ENCODE measurements at regions of chr6 and their contacts with region 1.

Region 1: GRCh38 chr6:36765594-36766398 is 68.2 kb downstream of the RAB44 start:
- DNase-seq: peak; percentile 68 to 71
- ATAC-seq: peak; percentile 92 to 98
- H3K4me3 ChIP-seq: no peak overlapping the region
- H3K27ac ChIP-seq: no peak overlapping the region
- H3K4me1 ChIP-seq: no peaks in the 10 kb centered on the region
- CTCF ChIP-seq: peak; percentile 68
- EP300 ChIP-seq: no peak
- POLR2A ChIP-seq: no peak
- RAD21 ChIP-seq: peak; percentile 80 to 91

Region 2: DNA sequence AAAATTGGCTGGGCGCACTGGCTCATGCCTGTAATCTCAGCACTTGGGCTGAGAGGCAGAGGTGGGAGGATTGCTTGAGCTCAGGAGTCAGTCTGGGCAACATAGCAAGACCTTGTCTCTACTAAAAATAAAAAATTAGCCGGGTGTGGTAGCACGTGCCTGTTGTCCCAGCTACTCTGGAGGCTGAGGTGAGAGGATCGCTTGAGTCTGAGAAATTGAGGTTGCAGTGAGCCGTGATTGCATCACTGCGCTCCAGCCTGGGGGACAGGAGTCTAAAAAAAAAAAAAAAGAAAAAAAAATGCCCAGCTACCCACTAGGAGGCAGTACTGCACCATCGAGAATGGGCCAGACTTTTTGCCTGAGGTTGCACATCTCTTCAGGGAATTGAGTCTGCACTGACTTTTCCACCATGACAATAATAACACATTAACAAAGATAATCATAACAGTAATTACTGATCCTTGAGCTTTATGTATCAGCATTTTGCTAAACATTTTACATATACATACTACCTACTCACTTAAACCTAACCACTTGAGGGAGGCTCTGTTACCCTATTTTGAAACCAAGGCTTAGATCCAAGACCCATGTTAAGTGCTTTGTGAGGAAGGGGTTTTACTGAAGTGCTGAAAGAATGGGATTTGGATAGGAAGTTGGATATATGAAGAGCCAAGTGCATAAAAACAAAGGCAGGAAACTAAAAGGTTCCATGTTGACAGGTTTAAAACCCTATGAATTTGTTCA is 150.6 kb before region 1 on chr6:
- CTCF ChIA-PET with region 1: interaction called, 50 read pairs
- POLR2A ChIA-PET with region 1: no interaction called
- DNase-seq: peak; percentile 40 to 60
- ATAC-seq: peak; percentile 9 to 15; a peak in 2 of 6 replicates
- H3K4me3 ChIP-seq: no peak overlapping the region
- H3K27ac ChIP-seq: peak overlapping the region; percentile 76 to 79
- H3K4me1 ChIP-seq: peaks cover 47% of the 10 kb centered on the region
- CTCF ChIP-seq: peak; percentile 78
- EP300 ChIP-seq: no peak
- POLR2A ChIP-seq: no peak
- RAD21 ChIP-seq: peak; percentile 78 to 80

Region 3: DNA sequence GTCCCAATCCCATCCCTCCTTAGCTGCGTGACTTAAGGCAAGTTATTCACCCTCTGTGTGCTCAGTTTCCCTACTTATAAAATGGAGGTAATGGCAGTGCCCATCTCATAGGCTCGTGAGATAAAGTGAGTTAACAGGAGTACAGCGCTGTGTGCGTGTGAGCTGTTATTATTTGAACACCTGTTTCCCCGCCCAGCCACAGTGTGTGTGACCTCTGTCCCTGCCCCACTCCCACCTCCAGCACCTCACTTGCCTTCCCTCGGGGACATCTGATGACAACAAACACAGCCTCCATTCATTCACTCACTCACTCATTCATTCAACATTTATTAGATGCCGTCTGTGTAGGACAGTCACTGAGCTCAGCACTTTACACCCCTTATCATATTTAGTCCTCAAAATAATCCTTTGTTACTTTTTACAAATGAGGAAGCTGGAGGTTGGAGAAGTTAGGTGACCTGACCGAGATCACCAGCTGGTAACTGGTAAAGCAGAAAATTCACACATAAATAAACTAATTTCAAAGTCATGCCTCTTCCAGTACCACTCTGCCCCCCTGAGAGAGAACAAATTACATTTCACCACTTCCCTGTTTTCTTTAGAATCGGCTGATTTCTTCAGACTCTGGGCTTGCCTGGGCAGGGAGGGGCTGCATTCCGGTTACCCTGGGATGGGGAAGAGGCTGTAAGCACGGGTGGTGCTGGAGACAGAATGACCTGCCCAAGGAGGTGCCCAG is 14.8 kb after region 1 on chr6:
- CTCF ChIA-PET with region 1: interaction called, 137 read pairs
- POLR2A ChIA-PET with region 1: no interaction called
- DNase-seq: no peak
- ATAC-seq: no peak
- H3K4me3 ChIP-seq: no peak overlapping the region
- H3K27ac ChIP-seq: no peak overlapping the region
- H3K4me1 ChIP-seq: no peaks in the 10 kb centered on the region
- CTCF ChIP-seq: no peak
- EP300 ChIP-seq: no peak
- POLR2A ChIP-seq: no peak
- RAD21 ChIP-seq: no peak

Region 4: GRCh38 chr6:36851149-36851614 is 85.4 kb after region 1 on chr6:
- CTCF ChIA-PET with region 1: interaction called, 12 read pairs
- POLR2A ChIA-PET with region 1: no interaction called
- DNase-seq: peak; percentile 19 to 45
- ATAC-seq: no peak
- H3K4me3 ChIP-seq: no peak overlapping the region
- H3K27ac ChIP-seq: no peak overlapping the region
- H3K4me1 ChIP-seq: no peaks in the 10 kb centered on the region
- CTCF ChIP-seq: peak; percentile 53
- EP300 ChIP-seq: no peak
- POLR2A ChIP-seq: no peak
- RAD21 ChIP-seq: peak; percentile 31 to 50; a peak in 3 of 5 replicates

Region 5: DNA sequence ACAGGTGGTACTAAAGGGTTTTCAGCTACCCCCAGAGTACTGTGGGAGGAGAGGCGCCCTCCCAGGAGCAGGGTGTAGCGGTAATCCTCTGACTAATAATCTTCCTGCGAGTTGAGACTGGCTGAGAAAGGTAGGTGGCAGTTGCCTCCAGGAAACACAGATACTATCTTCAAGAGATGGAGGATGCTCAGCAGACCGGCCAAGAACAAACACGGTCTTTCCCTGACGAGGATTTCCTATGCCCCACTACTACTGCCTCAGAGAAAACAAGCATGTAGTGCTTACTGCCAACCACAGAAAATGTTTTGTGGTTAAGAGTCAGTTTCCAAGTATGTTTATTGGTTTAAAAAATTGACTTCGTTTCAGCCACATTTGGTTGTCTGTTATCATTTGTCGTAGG is 146.8 kb after region 1 on chr6:
- CTCF ChIA-PET with region 1: interaction called, 14 read pairs
- POLR2A ChIA-PET with region 1: no interaction called
- DNase-seq: no peak
- ATAC-seq: no peak
- H3K4me3 ChIP-seq: no peak overlapping the region
- H3K27ac ChIP-seq: no peak overlapping the region
- H3K4me1 ChIP-seq: peaks cover 16% of the 10 kb centered on the region
- CTCF ChIP-seq: no peak
- EP300 ChIP-seq: no peak
- POLR2A ChIP-seq: no peak
- RAD21 ChIP-seq: no peak

Measured in A549 (cell line).